Right lobe of liver (tissue), 6 donors: ENCODE measurements at regions of chr3 and their contacts with region 1.

Region 1: GRCh38 chr3:197002701-197003454 is 26.7 kb downstream of the MELTF start:
- DNase-seq: peak; percentile 89 to 94 (median 91)
- ATAC-seq: peak; percentile 91 to 95 (median 92)
- H3K4me3 ChIP-seq: peak overlapping the region; percentile 45 to 56 (median 50)
- H3K27ac ChIP-seq: peak overlapping the region in 1 of 3 donors; percentile 18
- H3K4me1 ChIP-seq: no peaks in the 10 kb centered on the region
- H3K27me3 ChIP-seq: no peaks in the 10 kb centered on the region
- CTCF ChIP-seq: peak; percentile 65 to 90 (median 78)
- POLR2A ChIP-seq: no peak

Region 2: DNA sequence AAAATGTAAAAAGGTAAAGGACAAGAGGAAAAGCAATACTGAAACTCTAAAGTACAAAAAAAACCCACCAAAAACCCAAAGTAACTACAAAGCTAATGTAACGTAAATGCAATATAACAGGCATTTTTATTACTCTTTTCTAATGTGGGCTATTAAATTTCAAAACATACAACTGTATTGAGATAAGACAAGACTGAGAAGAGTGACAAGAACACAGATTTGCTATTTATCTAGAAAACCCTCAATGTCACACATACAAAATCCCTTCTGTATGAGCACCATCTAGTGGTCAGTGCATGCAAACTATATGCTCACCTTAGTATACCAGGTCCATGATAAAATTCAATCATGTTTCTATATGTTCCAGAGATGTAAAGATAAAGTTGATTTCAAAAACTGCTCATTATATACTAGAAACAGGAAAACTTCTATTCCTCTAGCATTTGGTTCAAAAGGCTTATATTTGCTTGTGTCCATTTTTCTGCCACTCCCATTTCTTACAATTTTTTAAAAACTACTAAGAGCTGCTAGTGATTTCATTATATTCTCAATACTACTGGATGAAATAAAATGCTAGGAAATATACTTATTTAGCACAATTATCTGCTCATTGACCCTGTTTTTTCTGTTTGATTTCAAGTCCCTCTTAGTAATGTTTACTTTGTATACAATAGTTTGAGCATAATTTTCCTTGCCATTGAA is 184.2 kb after region 1 on chr3:
- intact Hi-C with region 1: loop called (anchors 5 to 10 kb)
- DNase-seq: no peak
- ATAC-seq: peak; percentile 87 to 92 (median 92)
- H3K4me3 ChIP-seq: no peak overlapping the region
- H3K27ac ChIP-seq: no peak overlapping the region
- H3K4me1 ChIP-seq: peaks cover 0 to 4% (median 0%) of the 10 kb centered on the region in 4 donors
- H3K27me3 ChIP-seq: no peaks in the 10 kb centered on the region
- CTCF ChIP-seq: peak; percentile 77 to 89 (median 84)
- POLR2A ChIP-seq: no peak